CD4-positive, alpha-beta memory T cell (primary cell): ENCODE measurements at regions of chr7 and their contacts with region 1.

Region 1: GRCh38 chr7:44372560-44373417 is 47.4 kb upstream of the CAMK2B start:
- DNase-seq: no peak
- H3K4me3 ChIP-seq: no peak overlapping the region
- H3K4me3 Mint-ChIP-seq: no peak overlapping the region
- H3K27ac ChIP-seq: no peak overlapping the region
- H3K27ac Mint-ChIP-seq: peak overlapping the region in 1 of 7 donors; percentile 32
- H3K4me1 ChIP-seq: no peaks in the 10 kb centered on the region
- H3K4me1 Mint-ChIP-seq: peaks cover 0 to 13% (median 12%) of the 10 kb centered on the region in 4 donors
- H3K27me3 ChIP-seq: no peaks in the 10 kb centered on the region
- H3K27me3 Mint-ChIP-seq: peaks cover 3 to 5% of the 10 kb centered on the region in 2 donors

Region 2: DNA sequence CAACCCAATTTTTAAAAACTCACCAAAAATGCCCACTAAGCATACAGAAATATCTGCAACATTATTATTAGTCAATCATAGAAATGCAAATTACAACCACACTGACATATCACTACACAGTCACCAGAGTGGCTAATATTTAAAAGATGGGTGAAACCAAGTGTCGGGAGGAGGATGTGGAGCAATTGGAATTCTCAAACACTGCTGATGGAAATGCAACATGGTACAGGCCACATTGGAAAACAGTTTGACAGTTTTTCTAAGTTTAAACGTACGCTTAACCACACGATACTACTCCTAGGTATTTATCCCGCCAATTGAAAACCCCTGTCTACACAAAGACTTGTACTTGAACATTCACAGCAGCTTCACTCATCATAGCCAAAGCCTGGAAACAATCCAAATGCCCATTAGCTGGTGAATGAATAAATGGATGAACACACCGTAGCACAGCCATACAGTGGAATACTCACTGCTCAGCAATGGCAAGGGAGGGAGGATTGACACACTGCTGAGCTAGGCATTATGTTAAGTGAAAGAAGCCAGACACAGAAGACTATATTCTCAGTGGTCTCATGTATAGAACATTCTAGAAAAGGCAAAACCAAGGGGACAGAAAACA is 199.9 kb before region 1 on chr7:
- CTCF ChIA-PET with region 1: no interaction called
- POLR2A ChIA-PET with region 1: no interaction called
- intact Hi-C with region 1: no loop called
- DNase-seq: no peak
- H3K4me3 ChIP-seq: no peak overlapping the region
- H3K4me3 Mint-ChIP-seq: no peak overlapping the region
- H3K27ac ChIP-seq: no peak overlapping the region
- H3K27ac Mint-ChIP-seq: no peak overlapping the region
- H3K4me1 ChIP-seq: no peaks in the 10 kb centered on the region
- H3K4me1 Mint-ChIP-seq: peaks cover 0 to under 1% (median under 1%) of the 10 kb centered on the region in 4 donors
- H3K27me3 ChIP-seq: no peaks in the 10 kb centered on the region
- H3K27me3 Mint-ChIP-seq: peaks cover 8 to 18% of the 10 kb centered on the region in 2 donors

Region 3: GRCh38 chr7:44387389-44387788 is 14.6 kb after region 1 on chr7:
- CTCF ChIA-PET with region 1: no interaction called
- POLR2A ChIA-PET with region 1: no interaction called
- intact Hi-C with region 1: loop called (anchors 1 kb)
- DNase-seq: no peak
- H3K4me3 ChIP-seq: no peak overlapping the region
- H3K4me3 Mint-ChIP-seq: no peak overlapping the region
- H3K27ac ChIP-seq: no peak overlapping the region
- H3K27ac Mint-ChIP-seq: peak overlapping the region in 3 of 7 donors; percentile 36 to 72 (median 53)
- H3K4me1 ChIP-seq: no peaks in the 10 kb centered on the region
- H3K4me1 Mint-ChIP-seq: peaks cover 0 to 4% (median 0%) of the 10 kb centered on the region in 4 donors
- H3K27me3 ChIP-seq: no peaks in the 10 kb centered on the region
- H3K27me3 Mint-ChIP-seq: no peaks in the 10 kb centered on the region